Left cardiac atrium (tissue), 4 donors: ENCODE measurements at regions of chr10 and their contacts with region 1.

Region 1: DNA sequence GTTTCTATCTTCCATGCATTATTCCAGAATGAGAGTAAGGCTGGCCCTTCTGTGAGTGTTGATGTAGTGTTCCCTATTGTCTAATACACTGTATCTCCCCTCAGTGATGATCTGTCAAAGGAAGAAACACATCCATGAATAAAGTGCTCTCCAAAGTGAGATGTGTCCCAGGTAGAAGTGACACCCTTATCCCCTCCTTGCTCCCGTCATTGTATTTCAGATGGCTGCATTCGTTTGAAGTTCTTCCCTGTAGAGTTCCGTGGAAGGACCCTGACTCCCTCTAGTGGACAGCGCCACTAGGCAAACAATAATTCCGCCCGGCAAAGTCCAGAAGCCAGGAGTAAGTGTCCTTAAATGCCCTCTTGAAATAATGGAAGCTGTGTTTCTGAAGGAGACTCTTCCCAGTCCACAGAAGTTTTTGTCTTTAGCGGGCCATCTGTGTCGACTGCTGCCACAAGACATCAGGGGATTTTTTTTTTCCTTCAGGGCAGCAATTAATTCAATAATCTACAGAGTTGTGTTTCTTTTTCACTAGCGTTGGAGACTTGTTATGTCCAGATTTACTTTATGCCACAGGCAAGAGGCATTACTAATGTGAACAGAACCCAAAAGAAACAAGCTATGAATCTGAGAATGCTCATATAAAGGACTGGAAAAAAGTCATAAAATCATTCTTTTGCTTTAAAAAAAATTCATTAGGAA is 64.6 kb downstream of the THNSL1 start:
- DNase-seq: peak; percentile 84
- ATAC-seq: peak; percentile 92 to 97

Region 2: GRCh38 chr10:24617771-24618391 is 463.1 kb before region 1 on chr10:
- intact Hi-C with region 1: loop called in 1 of 2 experiments (anchors 5 kb)
- DNase-seq: peak; percentile 54
- ATAC-seq: peak; percentile 48 to 50

Region 3: GRCh38 chr10:24642622-24643417 is 438.2 kb before region 1 on chr10:
- intact Hi-C with region 1: loop called (anchors 5 to 10 kb)
- DNase-seq: no peak
- ATAC-seq: peak; percentile 86 to 95

Region 4: DNA sequence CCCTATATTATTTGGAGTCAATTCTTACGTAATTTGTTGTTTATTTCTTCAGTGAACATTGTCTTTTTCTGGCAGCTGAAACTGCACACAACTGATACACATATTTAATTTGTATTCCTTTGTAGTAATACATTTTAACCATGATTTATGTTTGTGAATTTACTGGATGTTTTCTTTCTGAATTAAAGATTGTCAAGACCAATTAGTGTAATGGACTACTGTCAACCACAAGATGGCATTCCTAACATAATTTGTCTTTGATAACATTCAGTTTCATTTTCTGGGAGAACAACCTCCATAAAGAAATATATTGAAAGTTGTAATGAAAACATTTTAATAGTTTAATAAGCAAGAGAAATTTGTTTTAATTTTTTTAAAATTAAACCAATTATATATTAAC is 54.6 kb before region 1 on chr10:
- intact Hi-C with region 1: loop called in 1 of 2 experiments (anchors 5 kb)
- DNase-seq: no peak
- ATAC-seq: no peak

Region 5: DNA sequence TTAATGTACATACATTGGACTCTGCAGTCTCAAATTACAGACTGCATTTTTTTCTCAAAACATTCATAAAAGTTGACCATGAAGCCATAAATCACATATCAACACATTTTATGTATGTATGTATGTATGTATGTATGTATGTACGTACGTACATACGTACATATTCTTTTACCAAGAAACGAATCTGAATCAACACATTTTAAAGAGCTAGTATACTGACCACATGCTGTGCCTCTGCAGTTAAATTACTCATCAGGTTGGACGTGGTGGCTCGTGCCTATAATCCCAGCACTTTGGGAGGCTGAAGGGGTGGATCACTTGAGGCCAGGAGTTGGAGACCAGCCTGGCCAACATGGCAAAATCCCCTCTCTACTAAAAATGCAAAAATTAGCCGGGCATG is 199.6 kb after region 1 on chr10:
- intact Hi-C with region 1: no loop called
- DNase-seq: no peak
- ATAC-seq: no peak

Region 6: DNA sequence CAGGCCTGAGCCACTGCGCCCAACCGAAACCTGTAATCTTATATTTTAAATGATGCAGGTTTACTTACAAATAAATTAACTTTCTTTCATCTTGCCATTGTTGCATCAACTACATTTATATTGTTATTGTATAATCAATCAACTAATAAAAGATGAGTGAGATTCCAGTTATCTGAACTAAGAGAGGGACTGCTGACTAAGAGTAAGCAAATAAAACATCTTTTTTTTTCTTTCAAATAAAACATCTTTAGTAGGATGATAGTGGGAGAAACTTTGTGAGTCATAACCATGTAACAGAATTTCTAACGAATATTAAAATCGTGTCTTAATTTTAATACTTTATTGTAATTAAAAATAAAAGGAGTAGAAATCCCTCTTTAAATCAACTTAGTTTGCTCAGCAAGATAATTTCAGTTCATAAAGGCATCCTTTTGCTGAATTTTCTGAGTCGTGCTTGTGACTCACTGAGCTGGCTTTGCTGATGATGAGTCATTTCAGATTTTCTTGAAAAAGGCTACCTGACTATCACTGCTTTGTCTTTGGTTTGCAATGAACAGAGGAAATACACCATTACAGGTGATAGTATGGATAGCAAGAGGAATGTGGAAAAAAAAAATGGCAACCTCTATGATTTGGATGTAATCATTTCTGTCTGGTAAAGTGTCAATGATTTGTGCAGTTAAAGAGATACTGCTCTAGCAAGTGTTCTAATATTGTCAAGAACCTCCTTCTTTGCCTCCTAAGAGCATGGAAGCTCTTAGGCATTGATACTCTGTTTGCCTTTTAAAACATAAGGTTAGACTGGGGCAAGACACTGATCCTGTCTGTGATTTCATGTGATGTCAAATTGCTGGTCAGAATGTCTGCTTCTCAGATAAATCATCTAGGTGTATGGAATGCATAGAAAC is 213.2 kb after region 1 on chr10:
- intact Hi-C with region 1: no loop called
- DNase-seq: no peak
- ATAC-seq: no peak